Common myeloid progenitor, CD34-positive (primary cell): ENCODE measurements at regions of chr2 and their contacts with region 1.

Region 1: GRCh38 chr2:231530091-231531011 is at the start of gene NMUR1:
- DNase-seq: peak; percentile 57 to 74 (median 74)
- H3K4me3 ChIP-seq: peak within 1 kb of the TSS in 3 of 7 experiments; percentile 23 to 64 (median 50)
- H3K27ac ChIP-seq: no peak within 1 kb of the TSS
- H3K4me1 ChIP-seq: peaks cover 0 to 16% (median 9%) of the 10 kb centered on the region in 4 experiments
- H3K27me3 ChIP-seq: peaks cover 0 to 23% (median 5%) of the 10 kb centered on the region in 5 experiments

Region 2: DNA sequence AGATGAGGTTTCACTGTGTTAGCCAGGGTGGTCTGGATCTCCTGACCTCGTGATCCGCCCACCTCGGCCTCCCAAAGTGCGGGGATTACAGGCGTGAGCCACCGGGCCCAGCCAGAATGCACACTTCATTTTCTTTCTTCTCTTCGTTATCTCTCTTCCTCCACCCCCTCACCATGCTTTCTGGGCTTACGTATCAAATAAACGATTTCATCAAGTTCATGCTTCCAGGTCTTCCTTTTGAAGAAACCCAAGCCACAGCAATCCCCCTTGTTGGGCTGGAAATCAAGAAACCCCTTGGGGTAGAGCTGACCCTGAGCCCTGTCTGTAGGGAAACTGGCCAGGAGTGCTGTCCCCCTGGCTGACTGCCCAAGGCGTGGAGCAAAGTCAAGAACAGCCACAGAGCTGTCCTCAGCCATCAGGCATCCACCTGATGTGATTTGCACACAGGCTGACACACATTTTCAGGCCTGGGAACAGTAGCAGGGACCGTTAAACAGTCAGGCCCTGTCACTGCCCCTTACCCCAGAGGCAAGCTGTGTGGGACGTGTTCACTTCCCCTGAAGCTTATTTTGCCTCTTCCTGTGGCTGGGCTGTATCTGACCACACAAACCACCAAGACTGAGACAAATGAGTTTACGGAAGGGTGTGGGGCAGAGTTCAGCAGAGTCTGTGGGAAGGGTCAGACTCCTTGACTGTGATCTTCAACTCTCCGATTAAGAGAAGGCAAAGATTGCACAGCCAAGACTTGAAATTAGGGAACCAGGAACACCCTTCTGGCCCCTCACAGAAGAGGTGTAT is 15.0 kb after region 1 on chr2:
- CTCF ChIA-PET with region 1: interaction called, 28 read pairs
- POLR2A ChIA-PET with region 1: no interaction called
- DNase-seq: peak; percentile 81 to 94 (median 90)
- H3K4me3 ChIP-seq: peak overlapping the region in 4 of 7 experiments; percentile 21 to 50 (median 47)
- H3K27ac ChIP-seq: peak overlapping the region; percentile 37 to 50
- H3K4me1 ChIP-seq: peaks cover 10 to 37% (median 23%) of the 10 kb centered on the region in 4 experiments
- H3K27me3 ChIP-seq: peaks cover 0 to 3% (median 0%) of the 10 kb centered on the region in 5 experiments

Region 3: DNA sequence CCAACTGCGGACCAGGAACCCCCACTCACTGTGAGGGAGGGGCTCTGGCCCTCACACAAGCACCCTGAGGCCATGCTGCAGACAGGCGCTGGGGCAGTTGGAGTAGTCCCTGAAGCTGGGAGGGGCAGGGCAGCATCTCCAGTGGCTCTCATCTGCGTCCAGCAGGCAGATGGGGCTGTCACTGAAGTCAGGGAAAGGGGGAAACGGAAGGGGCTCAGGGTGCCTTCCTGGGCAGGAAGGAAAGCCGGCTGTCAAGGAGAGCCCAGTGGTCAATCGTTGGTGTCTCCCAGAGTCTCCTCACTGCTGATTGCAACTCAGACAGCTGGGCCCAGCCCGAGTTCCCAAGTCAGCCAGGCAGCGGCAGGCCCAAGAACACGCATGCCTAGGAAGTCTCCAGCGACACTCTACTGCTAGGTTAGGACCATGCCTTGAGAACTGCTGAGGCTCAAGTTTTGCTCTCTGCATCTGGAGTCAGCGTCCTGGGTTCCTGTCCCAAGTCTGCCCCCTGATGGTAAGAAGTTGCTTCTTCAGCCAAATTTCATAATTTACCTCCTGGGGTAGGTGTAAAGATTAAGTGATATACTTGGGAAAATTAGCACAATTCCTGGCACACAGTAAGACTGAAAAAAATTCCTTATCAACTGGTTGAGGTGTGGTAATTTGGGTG is 27.4 kb after region 1 on chr2:
- CTCF ChIA-PET with region 1: interaction called, 49 read pairs
- POLR2A ChIA-PET with region 1: interaction called, 5 read pairs
- DNase-seq: peak; percentile 90 to 94 (median 92)
- H3K4me3 ChIP-seq: no peak overlapping the region
- H3K27ac ChIP-seq: no peak overlapping the region
- H3K4me1 ChIP-seq: peaks cover 7 to 37% (median 25%) of the 10 kb centered on the region in 4 experiments
- H3K27me3 ChIP-seq: no peaks in the 10 kb centered on the region